ENCODE measurements at regions of chr6 and their contacts with region 1.

Region 1: DNA sequence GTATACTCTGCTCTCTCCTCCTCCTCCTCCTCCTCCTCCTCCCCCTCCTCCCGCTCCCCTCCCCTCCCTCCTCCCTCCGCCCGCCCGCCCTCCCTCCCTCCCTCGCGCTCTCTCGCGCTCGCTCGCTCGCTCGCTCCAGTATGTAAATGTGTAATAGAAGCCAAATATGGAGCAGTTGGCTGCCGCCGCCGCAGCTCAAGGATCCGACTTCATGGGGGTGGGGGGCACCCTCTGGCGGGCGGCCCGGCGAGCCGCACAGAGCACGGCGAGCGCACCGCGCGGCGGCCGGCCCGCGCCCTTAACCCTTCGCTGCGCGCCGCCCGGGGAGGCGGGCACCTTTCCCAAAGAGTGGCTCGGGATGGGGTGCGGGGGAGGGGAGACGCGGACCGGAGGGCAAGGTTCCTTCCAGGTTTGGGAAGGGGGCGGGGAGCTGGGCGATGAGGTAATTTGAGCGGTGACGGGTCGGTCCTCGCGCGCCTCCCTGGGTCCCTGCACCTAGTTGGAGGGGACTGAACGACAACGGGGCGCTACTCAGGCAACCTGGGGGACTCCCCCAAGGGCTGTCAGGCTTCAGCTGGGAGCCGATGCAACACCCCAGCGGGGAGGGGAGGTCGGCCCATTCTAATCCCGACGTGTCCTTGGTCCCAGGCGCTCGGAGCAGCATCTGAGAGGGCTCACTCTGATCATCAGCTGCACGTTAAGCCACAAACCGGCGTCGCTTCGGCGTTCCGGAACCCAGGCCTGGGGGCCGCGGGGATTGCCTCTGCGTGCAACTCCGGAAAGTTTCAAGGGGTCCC is 409 bp upstream of the ATXN1 start:
- DNase-seq: peak; percentile 85 to 88
- ATAC-seq: peak; percentile 49 to 54
- H3K4me3 ChIP-seq: peak overlapping the region; percentile 85 to 97 (median 91)
- H3K27ac ChIP-seq: peak overlapping the region; percentile 96 to 99 (median 98)
- H3K4me1 ChIP-seq: peaks cover 31 to 32% of the 10 kb centered on the region in 2 donors
- H3K27me3 ChIP-seq: no peaks in the 10 kb centered on the region
- CTCF ChIP-seq: peak in 4 of 5 experiments; percentile 12 to 31 (median 16)
- POLR2A ChIP-seq: peak; percentile 40 to 57

Region 2: DNA sequence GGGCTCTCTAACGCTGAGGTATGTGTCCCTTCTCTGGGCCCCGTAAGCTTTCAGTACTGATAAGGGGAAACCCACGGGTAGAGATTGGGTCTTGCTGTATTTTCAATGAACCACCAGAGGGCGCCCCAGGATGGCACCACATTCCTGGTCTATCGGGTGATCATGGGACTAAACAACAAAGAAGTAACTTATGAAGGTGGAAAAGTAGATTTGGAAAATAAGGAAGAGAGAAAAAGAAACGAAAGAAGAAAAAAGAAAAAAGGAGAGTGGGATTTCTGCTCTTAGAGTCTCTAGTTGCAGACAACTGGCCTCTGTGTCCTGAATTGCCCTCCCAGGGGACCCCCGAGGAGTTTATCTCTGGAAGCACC is 429.5 kb before region 1 on chr6:
- in situ Hi-C with region 1: loop called in 2 of 4 experiments (anchors 5 kb)
- intact Hi-C with region 1: loop called (anchors 2 kb)
- DNase-seq: peak; percentile 64 to 75
- ATAC-seq: peak; percentile 63 to 65
- H3K4me3 ChIP-seq: no peak overlapping the region
- H3K27ac ChIP-seq: peak overlapping the region; percentile 69 to 76 (median 72)
- H3K4me1 ChIP-seq: peaks cover 57 to 67% of the 10 kb centered on the region in 2 donors
- H3K27me3 ChIP-seq: no peaks in the 10 kb centered on the region
- CTCF ChIP-seq: peak; percentile 90 to 95 (median 92)
- POLR2A ChIP-seq: no peak

Region 3: DNA sequence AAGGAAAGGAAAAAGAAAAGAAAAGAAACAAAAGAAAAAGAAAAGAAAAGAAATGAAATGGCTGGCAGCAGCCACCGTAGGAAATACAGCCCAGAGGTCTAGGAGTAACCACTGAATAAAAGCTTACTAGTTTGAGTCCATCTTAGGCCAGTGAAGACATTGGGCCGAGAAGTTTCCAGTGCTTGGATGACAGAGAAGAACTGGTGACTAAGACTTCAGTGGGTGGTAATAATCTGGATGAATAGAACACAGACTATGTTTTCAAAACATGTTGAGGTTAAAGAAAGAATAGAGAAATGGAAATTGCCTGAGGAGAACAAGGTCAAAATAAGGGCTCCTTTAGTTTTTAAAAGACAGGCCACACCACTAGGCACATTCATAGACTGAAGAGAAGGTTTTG is 199.2 kb before region 1 on chr6:
- in situ Hi-C with region 1: no loop called
- intact Hi-C with region 1: loop called (anchors 5 kb)
- DNase-seq: no peak
- ATAC-seq: no peak
- H3K4me3 ChIP-seq: no peak overlapping the region
- H3K27ac ChIP-seq: no peak overlapping the region
- H3K4me1 ChIP-seq: peaks cover 35 to 36% of the 10 kb centered on the region in 2 donors
- H3K27me3 ChIP-seq: no peaks in the 10 kb centered on the region
- CTCF ChIP-seq: no peak
- POLR2A ChIP-seq: no peak

Region 4: GRCh38 chr6:16670183-16670582 is 91.5 kb before region 1 on chr6:
- in situ Hi-C with region 1: loop called in 1 of 4 experiments (anchors 10 kb)
- intact Hi-C with region 1: no loop called
- DNase-seq: peak in 1 of 2 donors; percentile 18
- ATAC-seq: peak in 1 of 2 donors; percentile 22
- H3K4me3 ChIP-seq: no peak overlapping the region
- H3K27ac ChIP-seq: no peak overlapping the region
- H3K4me1 ChIP-seq: peaks cover 36 to 45% of the 10 kb centered on the region in 2 donors
- H3K27me3 ChIP-seq: no peaks in the 10 kb centered on the region
- CTCF ChIP-seq: no peak
- POLR2A ChIP-seq: no peak

Region 5: GRCh38 chr6:16712931-16713484 is 48.7 kb before region 1 on chr6:
- in situ Hi-C with region 1: no loop called
- intact Hi-C with region 1: loop called (anchors 2 kb)
- DNase-seq: peak in 1 of 2 donors; percentile 27
- ATAC-seq: peak; percentile 98
- H3K4me3 ChIP-seq: peak overlapping the region in 2 of 4 donors; percentile 15 to 19
- H3K27ac ChIP-seq: peak overlapping the region; percentile 56 to 80 (median 63)
- H3K4me1 ChIP-seq: peaks cover 13 to 26% of the 10 kb centered on the region in 2 donors
- H3K27me3 ChIP-seq: no peaks in the 10 kb centered on the region
- CTCF ChIP-seq: no peak
- POLR2A ChIP-seq: no peak

Region 6: DNA sequence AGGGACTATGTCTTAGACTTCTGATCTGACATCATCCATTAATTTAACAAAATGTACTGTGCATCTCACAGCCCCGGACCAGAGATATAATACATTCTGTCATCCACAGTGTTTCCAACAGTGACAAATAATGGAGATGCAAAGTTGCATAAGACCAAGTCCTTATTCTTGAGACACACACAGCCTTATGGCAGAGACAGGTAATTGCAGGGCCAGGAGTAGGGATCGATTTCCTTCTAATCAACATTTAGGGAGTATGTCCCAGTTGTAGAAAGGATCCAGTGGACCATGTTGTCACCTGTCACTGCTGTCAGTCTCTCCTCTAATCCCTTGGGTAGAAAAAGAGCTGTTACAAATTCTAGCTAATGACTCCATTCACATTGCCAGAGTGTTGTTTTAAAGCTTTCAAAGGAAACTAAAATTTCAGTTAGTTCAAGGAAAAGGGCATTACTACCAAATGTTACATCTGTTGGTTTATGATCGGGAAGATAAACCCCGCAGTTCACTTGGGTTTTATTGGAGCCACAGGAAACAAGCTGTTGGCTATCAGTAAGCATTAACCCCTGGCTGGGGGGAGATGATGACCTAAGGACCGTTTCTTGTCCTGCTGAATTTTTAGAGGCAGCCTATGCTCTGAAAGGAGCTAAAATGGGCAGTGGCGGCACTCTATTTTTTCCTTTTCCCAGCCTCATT is 111.0 kb after region 1 on chr6:
- in situ Hi-C with region 1: no loop called
- intact Hi-C with region 1: no loop called
- DNase-seq: no peak
- ATAC-seq: no peak
- H3K4me3 ChIP-seq: no peak overlapping the region
- H3K27ac ChIP-seq: no peak overlapping the region
- H3K4me1 ChIP-seq: no peaks in the 10 kb centered on the region
- H3K27me3 ChIP-seq: no peaks in the 10 kb centered on the region
- CTCF ChIP-seq: no peak
- POLR2A ChIP-seq: no peak

Region 7: DNA sequence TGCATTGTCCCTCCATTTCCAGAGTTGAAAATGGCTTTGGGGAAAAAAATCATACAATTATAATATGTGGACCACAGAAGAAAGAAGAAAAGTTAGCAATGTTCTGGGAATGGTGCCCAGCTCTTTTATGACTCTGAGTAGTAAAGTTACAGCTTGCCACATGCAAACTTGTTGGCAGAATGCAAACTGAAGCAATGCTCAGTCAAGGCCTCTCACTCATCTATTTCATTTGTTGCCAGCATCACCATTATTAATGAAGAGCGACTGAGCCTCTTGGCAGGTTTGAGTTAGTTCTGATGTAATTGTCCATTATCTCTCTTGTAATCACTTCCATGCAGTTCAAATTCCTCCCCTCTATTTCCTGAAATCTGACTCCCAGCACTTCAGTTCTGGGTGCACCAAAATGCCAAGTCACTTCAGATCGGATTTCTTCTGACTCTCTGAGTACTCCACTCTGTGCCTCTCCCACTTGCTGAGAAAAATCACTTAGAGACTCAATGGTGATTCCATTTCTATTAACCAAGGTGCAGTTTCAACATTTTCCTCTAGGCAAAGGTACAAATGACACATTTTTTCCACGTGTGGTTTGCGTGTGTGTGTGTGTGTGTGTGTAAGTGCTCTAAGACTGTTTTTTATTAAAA is 185.8 kb after region 1 on chr6:
- in situ Hi-C with region 1: no loop called
- intact Hi-C with region 1: loop called (anchors 5 kb)
- DNase-seq: peak; percentile 64 to 77
- ATAC-seq: peak; percentile 96 to 99
- H3K4me3 ChIP-seq: no peak overlapping the region
- H3K27ac ChIP-seq: peak overlapping the region; percentile 52 to 75 (median 72)
- H3K4me1 ChIP-seq: peaks cover 21% of the 10 kb centered on the region in 2 donors
- H3K27me3 ChIP-seq: no peaks in the 10 kb centered on the region
- CTCF ChIP-seq: no peak
- POLR2A ChIP-seq: no peak

Region 8: GRCh38 chr6:16964553-16965501 is 203.2 kb after region 1 on chr6:
- in situ Hi-C with region 1: no loop called
- intact Hi-C with region 1: no loop called
- DNase-seq: peak; percentile 60 to 71
- ATAC-seq: peak; percentile 91 to 95
- H3K4me3 ChIP-seq: no peak overlapping the region
- H3K27ac ChIP-seq: no peak overlapping the region
- H3K4me1 ChIP-seq: peaks cover 4 to 9% of the 10 kb centered on the region in 2 donors
- H3K27me3 ChIP-seq: no peaks in the 10 kb centered on the region
- CTCF ChIP-seq: peak; percentile 83 to 91 (median 90)
- POLR2A ChIP-seq: no peak

Region 9: GRCh38 chr6:17233531-17233930 is 471.9 kb after region 1 on chr6:
- in situ Hi-C with region 1: no loop called
- intact Hi-C with region 1: no loop called
- DNase-seq: no peak
- ATAC-seq: no peak
- H3K4me3 ChIP-seq: no peak overlapping the region
- H3K27ac ChIP-seq: no peak overlapping the region
- H3K4me1 ChIP-seq: peaks cover 9 to 13% of the 10 kb centered on the region in 2 donors
- H3K27me3 ChIP-seq: no peaks in the 10 kb centered on the region
- CTCF ChIP-seq: no peak
- POLR2A ChIP-seq: no peak

Measured in gastrocnemius medialis (tissue), 4 donors.